CD4-positive, alpha-beta memory T cell (primary cell): ENCODE measurements at regions of chr4 and their contacts with region 1.

Region 1: GRCh38 chr4:185096032-185096653 is 46.9 kb upstream of the SLC25A4 start:
- DNase-seq: peak in 4 of 5 donors; percentile 12 to 18 (median 14)
- H3K4me3 ChIP-seq: no peak overlapping the region
- H3K4me3 Mint-ChIP-seq: no peak overlapping the region
- H3K27ac ChIP-seq: no peak overlapping the region
- H3K27ac Mint-ChIP-seq: no peak overlapping the region
- H3K4me1 ChIP-seq: no peaks in the 10 kb centered on the region
- H3K4me1 Mint-ChIP-seq: no peaks in the 10 kb centered on the region
- H3K27me3 ChIP-seq: no peaks in the 10 kb centered on the region
- H3K27me3 Mint-ChIP-seq: peaks cover 17 to 25% of the 10 kb centered on the region in 2 donors

Region 2: DNA sequence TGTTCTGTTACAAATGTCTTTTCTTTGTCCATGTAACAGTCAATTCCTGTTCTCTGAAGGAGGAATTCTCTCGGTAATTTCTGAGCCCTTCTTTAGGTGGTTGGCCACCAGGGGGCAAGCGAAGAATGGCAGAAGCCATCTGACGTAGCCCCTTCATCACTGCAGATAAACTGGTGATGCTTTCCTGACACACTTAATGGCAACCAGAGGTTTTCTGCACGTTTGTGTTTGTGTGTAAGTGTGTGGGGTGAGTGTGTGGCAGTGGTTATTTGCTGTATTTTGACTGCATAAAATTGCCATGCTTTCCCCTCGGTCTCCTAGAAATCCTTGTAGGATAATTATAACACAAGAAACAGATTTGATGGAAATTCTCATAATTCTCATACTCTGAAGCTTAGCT is 1255.8 kb before region 1 on chr4:
- CTCF ChIA-PET with region 1: no interaction called
- POLR2A ChIA-PET with region 1: no interaction called
- intact Hi-C with region 1: loop called (anchors 10 kb)
- DNase-seq: peak; percentile 43 to 49 (median 47)
- H3K4me3 ChIP-seq: no peak overlapping the region
- H3K4me3 Mint-ChIP-seq: no peak overlapping the region
- H3K27ac ChIP-seq: no peak overlapping the region
- H3K27ac Mint-ChIP-seq: peak overlapping the region in 1 of 7 donors; percentile 15
- H3K4me1 ChIP-seq: no peaks in the 10 kb centered on the region
- H3K4me1 Mint-ChIP-seq: no peaks in the 10 kb centered on the region
- H3K27me3 ChIP-seq: no peaks in the 10 kb centered on the region
- H3K27me3 Mint-ChIP-seq: peaks cover 13 to 23% of the 10 kb centered on the region in 2 donors

Region 3: GRCh38 chr4:185005216-185005819 is 90.8 kb before region 1 on chr4:
- CTCF ChIA-PET with region 1: interaction called, 4 read pairs
- POLR2A ChIA-PET with region 1: no interaction called
- intact Hi-C with region 1: loop called (anchors 1 kb)
- DNase-seq: peak; percentile 62 to 67 (median 64)
- H3K4me3 ChIP-seq: no peak overlapping the region
- H3K4me3 Mint-ChIP-seq: peak overlapping the region; percentile 30 to 72 (median 60)
- H3K27ac ChIP-seq: no peak overlapping the region
- H3K27ac Mint-ChIP-seq: peak overlapping the region in 1 of 7 donors; percentile 6
- H3K4me1 ChIP-seq: peaks cover 7% of the 10 kb centered on the region
- H3K4me1 Mint-ChIP-seq: peaks cover 4 to 12% (median 5%) of the 10 kb centered on the region in 4 donors
- H3K27me3 ChIP-seq: no peaks in the 10 kb centered on the region
- H3K27me3 Mint-ChIP-seq: peaks cover 25 to 42% of the 10 kb centered on the region in 2 donors

Region 4: DNA sequence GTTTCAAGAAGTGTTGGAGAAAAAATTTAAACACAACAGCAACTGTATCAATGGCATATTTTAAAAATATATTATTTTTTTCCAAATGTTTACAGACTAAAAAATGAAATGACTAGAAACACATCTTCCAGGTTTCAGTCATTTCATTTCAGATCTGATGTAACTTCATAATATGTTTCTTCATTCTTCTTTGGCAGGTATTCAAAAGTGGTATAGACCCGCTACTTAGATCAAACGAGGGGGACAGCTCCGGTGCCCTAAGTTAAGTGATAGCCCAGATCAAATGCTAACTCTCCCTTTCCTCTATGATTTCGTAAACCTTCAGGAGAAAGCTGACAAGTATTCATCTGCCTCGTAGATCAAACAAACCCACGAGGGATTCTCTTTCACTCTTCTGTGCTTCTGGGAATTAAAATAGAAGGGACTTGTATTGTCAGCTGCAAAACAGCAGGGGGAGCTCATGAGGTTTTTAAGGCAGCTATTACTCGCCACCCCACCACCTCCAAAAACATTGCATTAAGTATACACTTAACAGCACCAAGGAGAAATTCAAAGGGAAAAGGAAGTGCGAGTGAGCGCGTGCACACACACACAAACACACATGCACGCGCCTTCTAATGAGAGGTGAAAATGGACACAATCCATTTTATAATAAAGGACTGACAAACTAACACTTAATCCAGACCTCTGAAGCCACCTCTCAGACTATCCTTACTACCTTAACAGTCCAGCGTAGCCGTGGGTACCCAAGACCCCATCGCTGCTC is 56.5 kb before region 1 on chr4:
- CTCF ChIA-PET with region 1: interaction called, 13 read pairs
- POLR2A ChIA-PET with region 1: no interaction called
- intact Hi-C with region 1: loop called (anchors 2 kb)
- DNase-seq: peak; percentile 46 to 60 (median 56)
- H3K4me3 ChIP-seq: no peak overlapping the region
- H3K4me3 Mint-ChIP-seq: peak overlapping the region in 3 of 8 donors; percentile 1 to 35 (median 33)
- H3K27ac ChIP-seq: no peak overlapping the region
- H3K27ac Mint-ChIP-seq: no peak overlapping the region
- H3K4me1 ChIP-seq: peaks cover 7% of the 10 kb centered on the region
- H3K4me1 Mint-ChIP-seq: peaks cover 4 to 6% (median 4%) of the 10 kb centered on the region in 4 donors
- H3K27me3 ChIP-seq: no peaks in the 10 kb centered on the region
- H3K27me3 Mint-ChIP-seq: peaks cover 9 to 16% of the 10 kb centered on the region in 2 donors

Region 5: GRCh38 chr4:185265942-185266341 is 169.8 kb after region 1 on chr4:
- CTCF ChIA-PET with region 1: no interaction called
- POLR2A ChIA-PET with region 1: no interaction called
- intact Hi-C with region 1: no loop called
- DNase-seq: peak in 3 of 5 donors; percentile 17 to 42 (median 27)
- H3K4me3 ChIP-seq: no peak overlapping the region
- H3K4me3 Mint-ChIP-seq: peak overlapping the region in 4 of 8 donors; percentile 11 to 50 (median 29)
- H3K27ac ChIP-seq: no peak overlapping the region
- H3K27ac Mint-ChIP-seq: peak overlapping the region in 4 of 7 donors; percentile 2 to 68 (median 41)
- H3K4me1 ChIP-seq: peaks cover 20% of the 10 kb centered on the region
- H3K4me1 Mint-ChIP-seq: peaks cover 11 to 39% (median 20%) of the 10 kb centered on the region in 4 donors
- H3K27me3 ChIP-seq: no peaks in the 10 kb centered on the region
- H3K27me3 Mint-ChIP-seq: no peaks in the 10 kb centered on the region

Region 6: DNA sequence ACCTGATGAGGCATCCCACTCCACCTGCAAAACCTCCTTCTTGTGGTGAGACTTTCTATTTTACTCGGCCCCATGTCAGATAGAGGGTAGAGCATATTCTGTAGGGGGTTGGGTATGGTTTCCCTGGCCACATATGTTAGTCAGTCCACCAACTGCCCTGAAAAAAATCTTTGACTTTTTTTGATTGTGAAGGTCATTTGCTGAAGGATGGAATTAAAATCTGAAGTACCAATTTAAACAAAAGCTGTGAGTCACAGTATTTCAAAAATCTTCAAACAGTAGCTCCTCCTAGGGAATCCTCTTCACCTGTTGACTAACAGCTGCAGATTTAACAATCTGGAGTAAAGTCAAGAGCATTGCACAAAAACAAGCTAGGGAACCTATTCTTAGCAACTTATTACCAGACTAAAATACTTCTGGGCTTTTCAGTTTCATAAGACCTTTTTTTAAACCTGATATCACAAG is 383.4 kb after region 1 on chr4:
- CTCF ChIA-PET with region 1: no interaction called
- POLR2A ChIA-PET with region 1: no interaction called
- intact Hi-C with region 1: no loop called
- DNase-seq: no peak
- H3K4me3 ChIP-seq: no peak overlapping the region
- H3K4me3 Mint-ChIP-seq: no peak overlapping the region
- H3K27ac ChIP-seq: no peak overlapping the region
- H3K27ac Mint-ChIP-seq: no peak overlapping the region
- H3K4me1 ChIP-seq: no peaks in the 10 kb centered on the region
- H3K4me1 Mint-ChIP-seq: no peaks in the 10 kb centered on the region
- H3K27me3 ChIP-seq: peaks cover 5% of the 10 kb centered on the region
- H3K27me3 Mint-ChIP-seq: peaks cover 25 to 26% of the 10 kb centered on the region in 2 donors

Region 7: DNA sequence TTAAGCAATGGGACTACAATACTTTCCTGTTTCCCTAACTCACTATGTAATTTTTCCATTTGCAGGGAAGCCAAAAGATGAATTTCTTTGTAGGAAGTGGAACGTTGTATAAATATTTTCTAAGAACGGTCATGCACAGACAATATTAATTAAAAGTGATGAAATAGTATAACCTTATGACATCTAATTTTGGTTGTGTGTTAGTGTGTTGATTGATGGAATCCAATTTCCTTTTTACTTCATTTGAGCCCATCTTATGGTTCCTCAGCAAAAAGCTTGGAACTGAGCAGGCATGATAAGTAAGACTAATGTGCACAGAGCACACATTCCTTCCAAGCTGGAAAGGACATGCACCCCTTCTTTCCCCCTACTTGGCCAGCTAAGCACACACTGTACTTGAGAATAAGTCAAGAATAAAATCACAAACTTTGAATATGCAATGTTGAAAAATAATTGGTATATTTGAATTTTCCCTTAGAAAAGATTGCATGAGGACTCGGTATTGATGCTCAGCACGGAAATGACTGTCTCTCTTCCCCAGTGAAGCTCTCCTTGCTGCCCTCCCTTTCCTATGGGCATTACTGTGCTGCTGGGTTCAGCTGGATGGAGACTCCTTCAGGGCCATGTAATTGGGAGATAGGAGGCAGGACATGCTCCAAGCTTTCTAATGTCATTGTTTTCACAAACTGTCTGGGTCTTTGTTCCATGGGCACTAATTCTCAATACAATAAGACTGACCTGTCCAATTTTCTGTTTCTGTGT is 458.4 kb after region 1 on chr4:
- CTCF ChIA-PET with region 1: no interaction called
- POLR2A ChIA-PET with region 1: no interaction called
- intact Hi-C with region 1: no loop called
- DNase-seq: no peak
- H3K4me3 ChIP-seq: no peak overlapping the region
- H3K4me3 Mint-ChIP-seq: no peak overlapping the region
- H3K27ac ChIP-seq: no peak overlapping the region
- H3K27ac Mint-ChIP-seq: no peak overlapping the region
- H3K4me1 ChIP-seq: no peaks in the 10 kb centered on the region
- H3K4me1 Mint-ChIP-seq: no peaks in the 10 kb centered on the region
- H3K27me3 ChIP-seq: no peaks in the 10 kb centered on the region
- H3K27me3 Mint-ChIP-seq: peaks cover 13 to 31% of the 10 kb centered on the region in 2 donors